K562 (cell line): ENCODE measurements at regions of chr11 and their contacts with region 1.

Region 1: GRCh38 chr11:119666463-119667131 is 62.4 kb downstream of the NECTIN1 start:
- DNase-seq: peak; percentile 70 to 83 (median 78)
- ATAC-seq: peak; percentile 99
- H3K4me3 ChIP-seq: no peak overlapping the region
- H3K27ac ChIP-seq: no peak overlapping the region
- H3K4me1 ChIP-seq: peaks cover 4 to 12% of the 10 kb centered on the region in 2 experiments; a peak in 1 of 5 replicates
- H3K27me3 ChIP-seq: peaks cover 2 to 28% of the 10 kb centered on the region in 2 experiments; a peak in 4 of 5 replicates
- CTCF ChIP-seq: peak; percentile 88 to 91 (median 89)
- EP300 ChIP-seq: no peak
- POLR2A ChIP-seq: no peak
- RAD21 ChIP-seq: peak; percentile 81 to 93

Region 2: GRCh38 chr11:119728651-119729580 is 62.3 kb after region 1 on chr11 and contains the start of gene NECTIN1:
- CTCF ChIA-PET with region 1: interaction called, 5 read pairs
- POLR2A ChIA-PET with region 1: interaction called, 3 read pairs
- in situ Hi-C with region 1: no loop called
- intact Hi-C with region 1: loop called (anchors 2 kb)
- DNase-seq: peak; percentile 79 to 93 (median 90)
- ATAC-seq: peak; percentile 99
- H3K4me3 ChIP-seq: peak within 1 kb of the TSS; percentile 54
- H3K27ac ChIP-seq: no peak within 1 kb of the TSS
- H3K4me1 ChIP-seq: peaks cover 0 to 25% of the 10 kb centered on the region in 2 experiments; a peak in 2 of 5 replicates
- H3K27me3 ChIP-seq: peaks cover 24 to 54% of the 10 kb centered on the region in 2 experiments; a peak in 3 of 5 replicates
- CTCF ChIP-seq: peak; percentile 73 to 84 (median 74)
- EP300 ChIP-seq: no peak
- POLR2A ChIP-seq: no peak
- RAD21 ChIP-seq: peak; percentile 65 to 83
- polyA plus RNA-seq, gene NECTIN1: 0.21 TPM in 1 of 2 experiments, not detected in the other

Region 3: DNA sequence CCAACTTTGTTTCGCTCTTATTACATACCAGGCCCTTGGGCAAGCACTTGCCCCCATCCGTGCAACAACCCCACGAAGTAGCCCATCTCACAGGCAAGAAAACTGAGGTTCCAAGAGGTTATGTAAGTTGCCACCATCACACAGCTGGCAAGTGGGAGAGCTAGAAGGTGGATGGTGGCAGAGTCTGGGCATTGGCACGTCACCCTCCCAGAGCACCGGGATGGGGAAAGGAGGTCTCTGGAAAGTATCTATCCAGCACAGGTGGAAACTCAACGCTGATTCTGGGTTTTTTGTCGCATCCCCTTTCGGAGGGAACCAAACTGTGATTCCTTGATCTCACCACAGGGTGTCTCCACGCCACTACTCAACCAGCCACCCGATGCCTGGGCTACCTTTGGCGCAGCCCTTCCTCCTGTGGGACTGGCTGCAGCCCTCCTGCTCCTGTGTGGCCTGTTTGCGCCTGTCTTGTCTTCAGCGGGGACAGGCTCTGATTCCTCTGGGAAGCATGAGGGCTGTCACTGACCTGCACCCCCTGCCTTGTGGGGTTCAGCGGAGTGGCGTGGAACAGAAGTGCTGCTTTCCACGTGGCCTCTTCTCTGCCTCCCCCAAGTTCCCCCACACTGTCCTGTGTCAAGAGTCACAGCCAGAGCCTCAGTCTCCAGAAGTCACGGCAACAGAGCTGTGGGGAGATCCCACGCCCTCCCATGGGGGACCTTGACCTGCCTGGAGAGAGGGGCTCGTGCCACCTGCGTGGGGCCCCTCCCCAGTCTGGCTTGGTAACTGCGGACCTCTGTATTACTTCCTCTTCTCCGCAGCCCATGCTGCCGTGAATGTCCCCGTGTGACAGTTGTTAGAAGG is 505.7 kb after region 1 on chr11:
- CTCF ChIA-PET with region 1: interaction called, 3 read pairs
- POLR2A ChIA-PET with region 1: no interaction called
- in situ Hi-C with region 1: no loop called
- intact Hi-C with region 1: loop called (anchors 5 kb)
- DNase-seq: peak; percentile 61 to 78 (median 72)
- ATAC-seq: peak; percentile 80
- H3K4me3 ChIP-seq: no peak overlapping the region
- H3K27ac ChIP-seq: no peak overlapping the region
- H3K4me1 ChIP-seq: peaks cover 0 to 18% of the 10 kb centered on the region in 2 experiments; a peak in 2 of 5 replicates
- H3K27me3 ChIP-seq: peaks cover 28 to 71% of the 10 kb centered on the region in 2 experiments; a peak in 4 of 5 replicates
- CTCF ChIP-seq: peak; percentile 87 to 89 (median 87)
- EP300 ChIP-seq: no peak
- POLR2A ChIP-seq: no peak
- RAD21 ChIP-seq: peak; percentile 88 to 94

Region 4: GRCh38 chr11:120303004-120303637 is 636.5 kb after region 1 on chr11:
- CTCF ChIA-PET with region 1: no interaction called
- POLR2A ChIA-PET with region 1: no interaction called
- in situ Hi-C with region 1: no loop called
- intact Hi-C with region 1: loop called (anchors 10 kb)
- DNase-seq: peak; percentile 81 to 87 (median 86)
- ATAC-seq: peak; percentile 94
- H3K4me3 ChIP-seq: no peak overlapping the region
- H3K27ac ChIP-seq: no peak overlapping the region
- H3K4me1 ChIP-seq: no peaks in the 10 kb centered on the region; a peak in 2 of 5 replicates
- H3K27me3 ChIP-seq: peaks cover 14 to 53% of the 10 kb centered on the region in 2 experiments; a peak in 4 of 5 replicates
- CTCF ChIP-seq: peak; percentile 97 to 100 (median 99)
- EP300 ChIP-seq: no peak
- POLR2A ChIP-seq: no peak
- RAD21 ChIP-seq: peak; percentile 71 to 91